Panc1 (cell line): ENCODE measurements at regions of chr2 and their contacts with region 1.

Region 1: GRCh38 chr2:119678998-119679710 is at the start of gene TMEM177:
- DNase-seq: no peak
- ATAC-seq: peak; percentile 96
- H3K4me3 ChIP-seq: peak within 1 kb of the TSS; percentile 95 to 98
- H3K27ac ChIP-seq: peak within 1 kb of the TSS; percentile 97
- H3K4me1 ChIP-seq: peaks cover 12% of the 10 kb centered on the region; the same call in 1 of the 2 replicates
- H3K27me3 ChIP-seq: 0 out of 2 replicates have a peak, but pooled peaks cover 2% of the 10 kb centered on the region
- CTCF ChIP-seq: no peak
- total RNA-seq, gene TMEM177: 16.8 TPM

Region 2: DNA sequence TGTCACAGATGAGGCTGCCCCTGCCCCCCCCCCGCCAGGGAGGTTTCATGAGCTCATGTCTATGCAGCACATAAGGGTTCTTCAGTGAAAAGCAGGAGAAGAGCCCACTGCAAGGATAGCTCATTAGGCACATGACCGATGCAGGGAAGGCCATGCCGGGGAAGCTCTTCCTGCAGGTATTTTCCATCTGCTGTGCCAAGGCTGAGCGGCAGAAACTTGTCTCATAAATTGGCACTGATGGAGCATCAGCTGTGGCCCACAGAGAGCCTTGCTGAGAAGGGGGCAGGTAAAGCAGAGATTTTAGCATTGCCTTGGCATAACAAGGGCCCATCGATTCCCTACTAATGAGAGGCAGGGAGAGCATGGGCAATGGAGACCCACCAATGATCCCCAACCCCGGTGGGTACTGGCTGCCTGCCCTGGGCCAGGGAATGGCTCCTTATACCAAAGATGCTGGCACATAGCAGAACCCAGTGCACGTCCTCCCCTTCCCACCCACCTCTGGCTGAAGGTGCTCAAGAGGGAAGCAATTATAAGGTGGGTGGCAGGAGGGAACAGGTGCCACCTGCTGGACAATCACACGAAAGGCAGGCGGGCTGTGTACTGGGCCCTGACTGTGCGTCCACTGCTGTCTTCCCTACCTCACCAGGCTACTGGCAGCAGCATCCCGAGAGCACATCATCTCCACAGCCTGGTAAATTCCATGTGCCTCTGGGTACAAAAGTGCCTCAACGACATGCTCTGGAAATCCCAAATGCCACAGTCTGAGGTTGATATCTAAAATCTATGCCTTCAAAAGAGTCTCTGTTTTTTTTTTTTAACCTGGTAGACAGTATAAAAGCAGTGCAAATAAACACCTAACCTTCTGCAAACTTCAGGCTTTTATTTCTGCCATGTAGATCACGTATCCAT is 414.1 kb before region 1 on chr2:
- CTCF ChIA-PET with region 1: no interaction called
- POLR2A ChIA-PET with region 1: no interaction called
- in situ Hi-C with region 1: no loop called
- intact Hi-C with region 1: no loop called
- DNase-seq: peak; percentile 28
- ATAC-seq: peak; percentile 93
- H3K4me3 ChIP-seq: no peak overlapping the region
- H3K27ac ChIP-seq: no peak overlapping the region
- H3K4me1 ChIP-seq: no peaks in the 10 kb centered on the region
- H3K27me3 ChIP-seq: no peaks in the 10 kb centered on the region
- CTCF ChIP-seq: peak; percentile 92

Region 3: DNA sequence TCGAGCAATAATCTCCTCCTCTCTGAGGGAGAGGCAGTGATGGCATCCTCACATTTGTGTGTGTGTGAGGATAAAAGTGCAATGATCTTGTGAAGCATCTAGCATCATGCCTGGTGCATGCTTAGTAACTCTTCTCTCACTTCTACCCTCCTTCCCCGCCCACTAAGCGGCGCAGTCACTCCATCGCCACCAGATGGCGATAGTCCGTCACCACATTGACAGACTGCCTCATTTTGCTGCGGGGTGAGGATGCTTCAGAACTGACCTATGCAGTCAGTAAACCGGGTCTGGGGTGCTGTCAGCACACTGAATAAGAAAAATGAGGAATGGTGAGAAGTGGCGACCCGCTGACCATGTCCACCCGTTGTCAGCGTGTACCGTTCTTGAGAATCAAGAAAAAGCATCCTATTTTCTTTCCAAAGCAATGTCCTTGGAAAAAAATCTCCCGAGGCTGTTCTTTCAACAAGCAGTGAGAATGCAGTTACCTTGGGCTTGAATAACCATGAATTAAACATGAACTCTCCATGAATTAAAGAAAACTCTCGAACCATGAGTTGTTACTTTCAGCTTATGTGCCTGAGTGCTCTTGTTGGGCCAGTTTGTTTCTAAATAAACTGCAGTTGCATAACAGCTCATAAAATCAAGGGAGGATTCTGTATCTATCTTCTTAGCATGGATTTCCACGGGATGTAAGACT is 37.4 kb before region 1 on chr2:
- CTCF ChIA-PET with region 1: interaction called, 11 read pairs
- POLR2A ChIA-PET with region 1: interaction called, 3 read pairs
- in situ Hi-C with region 1: no loop called
- intact Hi-C with region 1: no loop called
- DNase-seq: peak; percentile 60
- ATAC-seq: peak; percentile 97
- H3K4me3 ChIP-seq: no peak overlapping the region
- H3K27ac ChIP-seq: no peak overlapping the region
- H3K4me1 ChIP-seq: no peaks in the 10 kb centered on the region
- H3K27me3 ChIP-seq: no peaks in the 10 kb centered on the region
- CTCF ChIP-seq: peak; percentile 95

Region 4: GRCh38 chr2:119838179-119838578 is 159.0 kb after region 1 on chr2:
- CTCF ChIA-PET with region 1: no interaction called
- POLR2A ChIA-PET with region 1: no interaction called
- in situ Hi-C with region 1: no loop called
- intact Hi-C with region 1: no loop called
- DNase-seq: no peak
- ATAC-seq: no peak
- H3K4me3 ChIP-seq: no peak overlapping the region
- H3K27ac ChIP-seq: no peak overlapping the region
- H3K4me1 ChIP-seq: no peaks in the 10 kb centered on the region
- H3K27me3 ChIP-seq: no peaks in the 10 kb centered on the region
- CTCF ChIP-seq: no peak